H1 (cell line): ENCODE measurements at regions of chr5 and their contacts with region 1.

Region 1: GRCh38 chr5:88190139-88190834 is 78.4 kb downstream of the TMEM161B start:
- DNase-seq: peak in 1 of 2 experiments; percentile 25
- H3K4me3 ChIP-seq: no peak overlapping the region
- H3K27ac ChIP-seq: no peak overlapping the region
- H3K4me1 ChIP-seq: peaks cover 0 to 2% (median 0%) of the 10 kb centered on the region in 4 experiments; a peak in 1 of 7 replicates
- H3K27me3 ChIP-seq: no peaks in the 10 kb centered on the region
- CTCF ChIP-seq: peak in 2 of 3 experiments; percentile 42 to 50; a peak in 3 of 4 replicates
- EP300 ChIP-seq: no peak
- POLR2A ChIP-seq: no peak
- RAD21 ChIP-seq: peak; percentile 68 to 73

Region 2: DNA sequence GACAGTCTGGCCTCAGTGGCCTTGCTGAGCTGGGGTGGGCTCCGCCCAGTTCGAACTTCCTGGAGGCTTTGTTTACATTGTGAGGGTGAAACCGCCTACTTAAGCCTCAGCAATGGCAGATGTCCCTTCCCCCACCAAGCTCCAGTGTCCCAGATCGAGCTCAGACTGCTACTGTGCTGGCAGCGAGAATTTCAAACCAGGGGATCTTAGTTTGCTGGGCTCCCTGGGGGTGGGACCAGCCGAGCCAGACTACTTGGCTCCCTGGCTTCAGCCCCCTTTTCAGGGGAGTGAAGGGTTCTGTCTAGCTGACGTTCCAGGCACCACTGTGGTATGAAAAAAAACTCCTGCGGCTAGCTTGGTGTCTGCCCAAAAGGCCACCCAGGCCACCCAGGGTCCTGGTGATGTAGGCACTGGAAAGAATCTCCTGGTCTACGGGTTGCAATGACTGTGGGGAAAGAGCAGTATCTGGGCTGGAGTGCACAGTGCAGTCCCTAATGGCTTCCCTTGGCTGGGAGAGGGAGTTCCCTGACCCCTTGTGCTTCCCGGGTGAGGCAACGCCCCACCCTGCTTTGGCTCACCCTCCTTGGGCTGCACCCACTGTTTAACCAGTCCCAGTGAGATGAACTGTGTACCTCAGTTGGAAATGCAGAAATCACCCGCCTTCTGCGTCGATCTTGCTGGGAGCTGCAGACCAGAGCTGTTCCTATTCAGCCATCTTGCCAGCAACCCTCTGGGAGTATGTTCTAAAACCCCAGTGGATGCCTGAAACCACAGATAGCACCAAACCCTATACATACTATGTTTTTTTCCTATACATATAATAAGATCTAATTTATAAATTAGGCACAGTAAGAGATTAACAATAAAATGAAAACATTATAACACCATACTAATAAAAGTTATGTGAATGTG is 17.2 kb before region 1 on chr5:
- CTCF ChIA-PET with region 1: interaction called, 11 read pairs
- POLR2A ChIA-PET with region 1: interaction called, 5 read pairs
- DNase-seq: no peak
- H3K4me3 ChIP-seq: no peak overlapping the region
- H3K27ac ChIP-seq: peak overlapping the region; percentile 63; the same call in 1 of the 2 replicates
- H3K4me1 ChIP-seq: peaks cover 0 to 5% (median 3%) of the 10 kb centered on the region in 4 experiments; a peak in 5 of 7 replicates
- H3K27me3 ChIP-seq: no peaks in the 10 kb centered on the region
- CTCF ChIP-seq: no peak
- EP300 ChIP-seq: no peak
- POLR2A ChIP-seq: 0 out of 3 replicates have a peak, but pooled peaks of 1 of the 2 experiments have one; percentile 27
- RAD21 ChIP-seq: no peak